Calu3 (cell line): ENCODE measurements at regions of chr10 and their contacts with region 1.

Region 1: DNA sequence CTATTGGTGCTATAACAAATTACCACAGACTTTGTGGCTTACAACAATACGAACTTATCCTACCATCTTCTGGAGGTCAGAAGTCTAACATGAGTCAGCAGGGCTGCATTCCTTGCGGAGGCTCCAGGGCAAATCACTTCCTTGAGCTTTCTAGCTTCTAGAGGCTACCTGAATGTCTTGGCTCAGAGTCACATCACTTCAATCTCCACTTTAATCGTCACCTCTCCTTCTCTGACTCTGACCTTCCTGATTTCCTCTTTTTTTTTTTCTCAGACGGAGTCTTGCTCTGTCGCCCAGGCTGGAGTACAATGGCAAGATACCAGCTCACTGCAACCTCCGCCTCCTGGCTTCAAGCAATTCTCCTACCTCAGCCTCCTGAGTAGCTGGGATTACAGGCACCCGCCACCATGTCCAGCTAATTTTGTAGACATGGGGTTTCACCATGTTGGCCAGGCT is 44.6 kb upstream of the ANAPC16 start:
- DNase-seq: peak; percentile 86
- H3K4me3 Mint-ChIP-seq: peak overlapping the region; percentile 25
- H3K27ac Mint-ChIP-seq: peak overlapping the region; percentile 83
- H3K4me1 Mint-ChIP-seq: peaks cover 37% of the 10 kb centered on the region
- H3K27me3 Mint-ChIP-seq: no peaks in the 10 kb centered on the region
- CTCF ChIP-seq: no peak

Region 2: GRCh38 chr10:72215652-72216549 is 44.7 kb after region 1 on chr10 and contains the starts of genes ANAPC16 and ASCC1:
- CTCF ChIA-PET with region 1: no interaction called
- intact Hi-C with region 1: loop called (anchors 1 kb)
- DNase-seq: peak; percentile 98
- H3K4me3 Mint-ChIP-seq: peak within 1 kb of the TSS; percentile 97
- H3K27ac Mint-ChIP-seq: peak within 1 kb of the TSS; percentile 92
- H3K4me1 Mint-ChIP-seq: peaks cover 27% of the 10 kb centered on the region
- H3K27me3 Mint-ChIP-seq: no peaks in the 10 kb centered on the region
- CTCF ChIP-seq: no peak
- total RNA-seq, gene ANAPC16: 118 and 119 TPM in 2 replicates
- total RNA-seq, gene ASCC1: 51.3 and 59.3 TPM in 2 replicates